ENCODE measurements at regions of chr10 and their contacts with region 1.

Region 1: DNA sequence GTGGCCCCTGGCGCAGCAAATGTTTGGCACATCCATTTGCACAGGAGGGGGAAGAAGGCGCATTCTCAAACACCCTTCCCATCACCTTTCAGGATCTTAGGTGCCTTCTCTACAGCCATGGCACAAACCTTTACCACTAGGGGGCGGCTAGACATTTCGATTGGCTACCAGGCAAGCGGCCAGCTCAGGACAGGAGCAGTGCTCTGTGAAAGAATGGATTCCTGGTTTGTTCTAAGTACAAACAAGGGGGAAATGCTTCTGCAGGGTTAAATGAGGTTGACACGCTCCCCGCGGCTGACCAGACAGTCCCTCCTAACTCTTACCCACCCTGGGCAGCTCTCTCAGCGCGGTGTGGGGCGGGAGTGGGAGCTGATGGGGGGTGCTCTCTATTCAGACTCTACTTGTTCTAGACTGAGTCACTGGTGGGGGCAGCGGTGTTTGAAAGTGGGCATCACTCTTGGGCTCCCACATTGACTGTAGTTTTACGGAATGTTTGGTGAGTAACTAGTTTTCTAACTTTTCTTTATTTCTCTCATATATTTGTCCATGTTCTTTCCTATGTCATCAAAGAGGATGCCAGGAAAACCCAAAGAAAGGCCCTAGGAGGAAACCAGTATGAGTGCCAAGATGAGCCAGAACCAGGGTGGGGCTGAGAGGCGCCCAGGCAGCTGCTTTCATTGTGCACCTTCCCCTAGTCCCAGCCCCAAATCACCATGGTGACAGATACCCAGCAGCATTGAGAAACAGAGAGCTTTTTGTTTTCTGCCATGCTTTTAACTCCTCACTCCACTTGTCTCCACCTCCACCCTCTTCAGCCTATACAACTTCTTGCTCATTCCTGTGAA is 61.4 kb upstream of the GPR158 start:
- DNase-seq: peak; percentile 61
- H3K4me3 ChIP-seq: no peak overlapping the region
- H3K27ac ChIP-seq: no peak overlapping the region
- H3K4me1 ChIP-seq: no peaks in the 10 kb centered on the region; a peak in 1 of 4 replicates
- H3K27me3 ChIP-seq: no peaks in the 10 kb centered on the region; the same call in 1 of the 2 replicates
- CTCF ChIP-seq: peak; percentile 84
- EP300 ChIP-seq: no peak
- RAD21 ChIP-seq: peak; percentile 86

Region 2: GRCh38 chr10:24982319-24983112 is 130.9 kb before region 1 on chr10:
- CTCF ChIA-PET with region 1: no interaction called
- POLR2A ChIA-PET with region 1: no interaction called
- DNase-seq: no peak
- H3K4me3 ChIP-seq: no peak overlapping the region
- H3K27ac ChIP-seq: no peak overlapping the region
- H3K4me1 ChIP-seq: no peaks in the 10 kb centered on the region
- H3K27me3 ChIP-seq: no peaks in the 10 kb centered on the region
- CTCF ChIP-seq: no peak
- EP300 ChIP-seq: no peak
- RAD21 ChIP-seq: no peak

Region 3: DNA sequence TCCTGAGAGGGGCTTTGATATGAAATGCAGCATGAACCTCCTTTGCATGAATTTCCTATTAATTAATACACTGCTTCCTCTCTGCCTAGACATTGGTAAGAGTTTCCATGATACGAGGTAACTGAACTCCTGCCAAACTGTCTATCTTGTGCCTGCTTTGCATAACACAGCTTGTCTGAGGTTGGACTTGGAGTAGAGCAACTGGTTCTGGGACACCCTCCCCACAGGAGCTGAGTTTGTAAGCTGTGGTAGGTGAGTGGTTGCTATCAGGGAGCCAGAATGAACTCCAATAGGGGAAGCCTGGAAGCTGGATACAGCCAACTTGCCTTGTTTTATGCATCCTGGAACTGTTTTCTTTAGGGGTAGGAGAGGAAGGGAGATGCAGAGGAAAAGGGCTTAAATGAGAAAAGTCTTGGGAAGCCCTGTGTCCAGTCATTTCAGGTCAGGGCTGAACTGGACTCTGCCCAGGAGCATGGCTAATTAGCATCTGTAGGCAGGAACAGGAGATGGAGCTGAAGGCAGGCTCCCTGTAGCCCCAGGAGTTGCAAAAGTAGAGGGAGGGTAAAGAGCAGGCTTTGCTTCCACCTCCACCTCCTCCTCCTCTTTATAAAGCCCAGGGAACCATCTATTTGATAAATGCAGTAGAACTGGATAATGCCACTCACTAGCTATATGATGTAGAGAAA is 11.8 kb before region 1 on chr10:
- CTCF ChIA-PET with region 1: interaction called, 18 read pairs
- POLR2A ChIA-PET with region 1: no interaction called
- DNase-seq: no peak
- H3K4me3 ChIP-seq: no peak overlapping the region
- H3K27ac ChIP-seq: no peak overlapping the region
- H3K4me1 ChIP-seq: peaks cover 0 to 5% of the 10 kb centered on the region in 2 experiments; a peak in 1 of 4 replicates
- H3K27me3 ChIP-seq: no peaks in the 10 kb centered on the region; the same call in 1 of the 2 replicates
- CTCF ChIP-seq: no peak
- EP300 ChIP-seq: no peak
- RAD21 ChIP-seq: no peak

Region 4: GRCh38 chr10:25174461-25175230 is 61.2 kb after region 1 on chr10 and contains the start of gene GPR158:
- CTCF ChIA-PET with region 1: interaction called, 10 read pairs
- POLR2A ChIA-PET with region 1: no interaction called
- DNase-seq: peak; percentile 90
- H3K4me3 ChIP-seq: peak within 1 kb of the TSS; percentile 59 to 60
- H3K27ac ChIP-seq: no peak within 1 kb of the TSS
- H3K4me1 ChIP-seq: peaks cover 0 to 13% of the 10 kb centered on the region in 2 experiments; a peak in 1 of 4 replicates
- H3K27me3 ChIP-seq: peaks cover 22% of the 10 kb centered on the region
- CTCF ChIP-seq: no peak
- EP300 ChIP-seq: no peak
- RAD21 ChIP-seq: no peak
- polyA plus RNA-seq, gene GPR158: not detected in 2 replicates

Region 5: DNA sequence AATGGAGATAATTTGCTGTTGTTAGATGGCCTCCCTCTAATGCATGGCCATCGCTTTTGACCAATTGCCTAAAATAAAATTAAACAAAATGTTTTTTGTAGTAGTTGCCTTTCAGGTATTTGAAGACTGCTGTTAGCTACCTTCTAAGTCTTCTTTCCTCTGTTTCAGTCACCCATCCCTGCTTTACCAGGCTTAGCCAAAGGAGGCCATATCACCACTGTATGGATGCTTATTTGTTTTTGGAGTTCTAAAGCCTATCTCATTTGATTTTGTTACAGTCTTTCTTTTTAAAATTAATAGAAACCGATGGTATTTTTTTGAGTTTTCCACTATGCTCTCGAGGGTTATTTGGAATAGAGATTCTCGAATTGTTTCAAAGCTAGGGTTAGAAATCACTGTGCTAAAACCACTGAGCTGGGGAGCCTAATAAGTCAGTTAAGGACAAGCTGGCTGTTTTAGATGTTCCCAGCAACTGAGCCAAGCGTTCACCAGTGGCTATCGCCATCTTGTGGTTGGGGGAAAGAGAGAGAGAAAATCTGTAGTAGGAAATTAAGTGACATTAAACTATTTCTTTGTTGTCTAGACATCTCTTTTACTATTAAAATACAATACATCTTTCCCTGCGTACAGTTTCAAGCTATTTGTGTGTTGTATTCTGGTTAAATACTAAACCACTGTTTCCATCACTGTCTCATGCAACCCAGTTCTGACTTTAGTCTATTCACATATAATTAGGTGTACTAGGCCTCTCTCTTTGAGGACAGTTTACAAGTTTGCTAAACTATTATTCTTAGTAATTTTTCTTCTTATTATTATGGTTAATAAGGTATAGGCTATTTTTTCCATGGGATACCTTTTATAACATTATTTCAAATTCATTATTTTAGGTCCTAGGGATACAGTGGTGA is 113.6 kb after region 1 on chr10:
- CTCF ChIA-PET with region 1: interaction called, 43 read pairs
- POLR2A ChIA-PET with region 1: no interaction called
- DNase-seq: peak; percentile 27
- H3K4me3 ChIP-seq: no peak overlapping the region; a peak in 1 of 4 replicates
- H3K27ac ChIP-seq: no peak overlapping the region
- H3K4me1 ChIP-seq: no peaks in the 10 kb centered on the region
- H3K27me3 ChIP-seq: no peaks in the 10 kb centered on the region
- CTCF ChIP-seq: peak; percentile 76
- EP300 ChIP-seq: no peak
- RAD21 ChIP-seq: peak; percentile 82

Region 6: DNA sequence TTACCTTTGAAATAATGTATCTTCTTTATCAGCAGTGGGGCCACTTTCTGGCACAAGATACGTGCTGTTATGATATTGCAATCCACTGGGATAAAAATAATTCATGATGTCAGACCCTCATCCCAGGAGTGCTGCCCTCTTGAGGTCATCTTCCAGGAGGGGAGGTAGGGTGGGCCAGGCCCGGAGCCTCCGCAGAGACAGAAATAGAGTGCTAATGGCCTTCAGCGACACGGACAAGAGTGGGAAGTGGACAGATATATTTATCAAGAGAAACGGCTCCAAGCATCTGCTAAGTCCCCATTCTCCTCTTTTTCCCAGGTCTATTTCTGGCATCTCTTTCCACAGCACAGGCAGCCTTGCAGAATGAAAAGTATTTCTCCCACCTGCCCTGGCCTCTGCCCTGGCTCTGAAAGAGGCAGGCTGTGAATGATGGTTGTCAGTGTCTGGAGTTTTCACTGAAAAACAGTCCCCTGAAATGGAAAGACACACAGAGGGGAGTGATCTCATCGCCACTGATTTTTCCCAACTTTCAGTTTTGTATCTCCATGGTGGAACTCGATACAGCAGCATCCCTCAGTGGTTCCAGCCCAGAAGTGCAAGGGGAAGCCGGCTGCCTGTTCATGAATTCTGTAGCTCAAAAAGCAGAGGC is 568.9 kb after region 1 on chr10:
- CTCF ChIA-PET with region 1: interaction called, 12 read pairs
- POLR2A ChIA-PET with region 1: no interaction called
- DNase-seq: peak; percentile 34
- H3K4me3 ChIP-seq: peak overlapping the region in 1 of 2 experiments; percentile 54; a peak in 2 of 4 replicates
- H3K27ac ChIP-seq: no peak overlapping the region
- H3K4me1 ChIP-seq: no peaks in the 10 kb centered on the region; a peak in 1 of 4 replicates
- H3K27me3 ChIP-seq: no peaks in the 10 kb centered on the region
- CTCF ChIP-seq: peak; percentile 40
- EP300 ChIP-seq: no peak
- RAD21 ChIP-seq: peak; percentile 71

Region 7: DNA sequence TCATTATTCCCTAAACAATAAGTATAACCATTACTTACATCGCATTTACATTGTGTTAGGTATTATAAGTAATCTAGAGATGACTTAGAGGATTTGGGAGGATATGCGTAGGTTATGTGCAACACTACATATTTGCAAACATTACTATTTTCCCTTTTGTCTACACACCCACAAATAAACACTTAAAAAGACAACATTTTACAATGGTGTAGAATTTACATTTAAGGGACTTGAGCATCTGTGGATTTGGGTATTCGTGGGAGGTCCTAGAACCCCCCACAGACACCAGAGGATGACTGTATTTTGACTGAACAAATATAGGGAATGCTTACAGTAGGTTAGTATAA is 600.5 kb after region 1 on chr10:
- CTCF ChIA-PET with region 1: interaction called, 26 read pairs
- POLR2A ChIA-PET with region 1: no interaction called
- DNase-seq: no peak
- H3K4me3 ChIP-seq: no peak overlapping the region
- H3K27ac ChIP-seq: no peak overlapping the region
- H3K4me1 ChIP-seq: no peaks in the 10 kb centered on the region
- H3K27me3 ChIP-seq: no peaks in the 10 kb centered on the region
- CTCF ChIP-seq: no peak
- EP300 ChIP-seq: no peak
- RAD21 ChIP-seq: no peak

Measured in SK-N-SH (cell line).